ENCODE measurements at regions of chr5 and their contacts with region 1.

Region 1: GRCh38 chr5:80711938-80712337 is 57.2 kb upstream of the DHFR start:
- DNase-seq: peak in 3 of 4 experiments; percentile 13 to 30 (median 15)
- ATAC-seq: peak; percentile 83
- H3K4me3 ChIP-seq: no peak overlapping the region
- H3K27ac ChIP-seq: no peak overlapping the region
- H3K4me1 ChIP-seq: no peaks in the 10 kb centered on the region
- H3K27me3 ChIP-seq: no peaks in the 10 kb centered on the region
- CTCF ChIP-seq: peak; percentile 42 to 53 (median 52); a peak in 5 of 6 replicates
- EP300 ChIP-seq: no peak
- POLR2A ChIP-seq: no peak
- RAD21 ChIP-seq: peak; percentile 27 to 65; a peak in 3 of 4 replicates

Region 2: GRCh38 chr5:81105261-81105877 is 393.4 kb after region 1 on chr5:
- CTCF ChIA-PET with region 1: no interaction called
- POLR2A ChIA-PET with region 1: no interaction called
- in situ Hi-C with region 1: no loop called
- intact Hi-C with region 1: loop called (anchors 1 kb)
- DNase-seq: no peak
- ATAC-seq: no peak
- H3K4me3 ChIP-seq: no peak overlapping the region
- H3K27ac ChIP-seq: no peak overlapping the region
- H3K4me1 ChIP-seq: no peaks in the 10 kb centered on the region
- H3K27me3 ChIP-seq: peaks cover 3 to 7% of the 10 kb centered on the region in 2 experiments; a peak in 3 of 5 replicates
- CTCF ChIP-seq: no peak
- EP300 ChIP-seq: no peak
- POLR2A ChIP-seq: no peak
- RAD21 ChIP-seq: no peak

Region 3: GRCh38 chr5:81165493-81166119 is 453.7 kb after region 1 on chr5:
- CTCF ChIA-PET with region 1: no interaction called
- POLR2A ChIA-PET with region 1: no interaction called
- in situ Hi-C with region 1: no loop called
- intact Hi-C with region 1: loop called (anchors 1 kb)
- DNase-seq: peak; percentile 52 to 68 (median 61)
- ATAC-seq: peak; percentile 97
- H3K4me3 ChIP-seq: no peak overlapping the region
- H3K27ac ChIP-seq: no peak overlapping the region
- H3K4me1 ChIP-seq: no peaks in the 10 kb centered on the region
- H3K27me3 ChIP-seq: peaks cover 9 to 26% of the 10 kb centered on the region in 2 experiments; a peak in 4 of 5 replicates
- CTCF ChIP-seq: peak; percentile 74 to 78 (median 74)
- EP300 ChIP-seq: no peak
- POLR2A ChIP-seq: no peak
- RAD21 ChIP-seq: peak; percentile 45 to 77; a peak in 3 of 4 replicates

Region 4: GRCh38 chr5:81909677-81910076 is 1197.7 kb after region 1 on chr5:
- CTCF ChIA-PET with region 1: no interaction called
- POLR2A ChIA-PET with region 1: no interaction called
- in situ Hi-C with region 1: no loop called
- intact Hi-C with region 1: no loop called
- DNase-seq: no peak
- ATAC-seq: no peak
- H3K4me3 ChIP-seq: no peak overlapping the region
- H3K27ac ChIP-seq: no peak overlapping the region
- H3K4me1 ChIP-seq: peaks cover 0 to 14% of the 10 kb centered on the region in 2 experiments; a peak in 4 of 5 replicates
- H3K27me3 ChIP-seq: no peaks in the 10 kb centered on the region
- CTCF ChIP-seq: no peak
- EP300 ChIP-seq: no peak
- POLR2A ChIP-seq: no peak
- RAD21 ChIP-seq: no peak